IMR-90 (cell line): ENCODE measurements at regions of chr10 and their contacts with region 1.

Region 1: GRCh38 chr10:35924759-35925158 is 282.7 kb upstream of the FZD8 start:
- DNase-seq: no peak
- ATAC-seq: no peak
- H3K4me3 ChIP-seq: no peak overlapping the region
- H3K27ac ChIP-seq: no peak overlapping the region
- H3K4me1 ChIP-seq: peaks cover 2% of the 10 kb centered on the region
- H3K27me3 ChIP-seq: no peaks in the 10 kb centered on the region
- CTCF ChIP-seq: no peak
- POLR2A ChIP-seq: no peak
- RAD21 ChIP-seq: no peak

Region 2: GRCh38 chr10:35563261-35563891 is 361.4 kb before region 1 on chr10:
- CTCF ChIA-PET with region 1: no interaction called
- POLR2A ChIA-PET with region 1: no interaction called
- dilution Hi-C with region 1: no loop called
- in situ Hi-C with region 1: no loop called
- intact Hi-C with region 1: no loop called
- DNase-seq: peak; percentile 76
- ATAC-seq: peak; percentile 64
- H3K4me3 ChIP-seq: no peak overlapping the region
- H3K27ac ChIP-seq: no peak overlapping the region
- H3K4me1 ChIP-seq: peaks cover 6% of the 10 kb centered on the region
- H3K27me3 ChIP-seq: no peaks in the 10 kb centered on the region
- CTCF ChIP-seq: peak; percentile 92
- POLR2A ChIP-seq: no peak
- RAD21 ChIP-seq: peak; percentile 83

Region 3: DNA sequence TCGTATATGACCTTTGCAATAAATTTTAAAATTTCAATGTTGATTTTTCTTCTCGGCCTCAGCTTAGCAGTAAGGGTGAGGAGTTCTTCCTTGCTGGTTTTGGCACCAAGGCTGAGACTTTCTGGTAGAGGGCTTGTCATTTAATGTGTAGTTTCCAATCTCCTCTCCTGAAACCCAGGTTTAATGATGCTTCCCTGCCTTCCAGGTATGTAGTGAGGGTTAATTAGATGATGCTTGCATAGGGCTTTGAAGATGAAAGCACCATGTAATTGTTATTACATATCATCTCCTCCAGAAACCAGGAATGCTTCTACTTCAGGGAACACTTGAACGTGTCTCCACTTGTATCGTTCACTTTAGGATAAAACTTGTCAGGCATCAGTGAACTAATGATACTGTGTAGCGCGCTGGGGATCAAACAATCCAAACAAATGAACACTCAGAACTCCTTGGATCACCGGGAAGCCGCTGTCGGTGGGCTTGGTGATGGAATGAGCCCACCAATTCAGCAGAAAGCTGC is 21.8 kb before region 1 on chr10:
- CTCF ChIA-PET with region 1: no interaction called
- POLR2A ChIA-PET with region 1: no interaction called
- dilution Hi-C with region 1: no loop called
- in situ Hi-C with region 1: no loop called
- intact Hi-C with region 1: loop called (anchors 1 kb)
- DNase-seq: no peak
- ATAC-seq: no peak
- H3K4me3 ChIP-seq: no peak overlapping the region
- H3K27ac ChIP-seq: no peak overlapping the region
- H3K4me1 ChIP-seq: peaks cover 6% of the 10 kb centered on the region
- H3K27me3 ChIP-seq: no peaks in the 10 kb centered on the region
- CTCF ChIP-seq: no peak
- POLR2A ChIP-seq: no peak
- RAD21 ChIP-seq: no peak

Region 4: DNA sequence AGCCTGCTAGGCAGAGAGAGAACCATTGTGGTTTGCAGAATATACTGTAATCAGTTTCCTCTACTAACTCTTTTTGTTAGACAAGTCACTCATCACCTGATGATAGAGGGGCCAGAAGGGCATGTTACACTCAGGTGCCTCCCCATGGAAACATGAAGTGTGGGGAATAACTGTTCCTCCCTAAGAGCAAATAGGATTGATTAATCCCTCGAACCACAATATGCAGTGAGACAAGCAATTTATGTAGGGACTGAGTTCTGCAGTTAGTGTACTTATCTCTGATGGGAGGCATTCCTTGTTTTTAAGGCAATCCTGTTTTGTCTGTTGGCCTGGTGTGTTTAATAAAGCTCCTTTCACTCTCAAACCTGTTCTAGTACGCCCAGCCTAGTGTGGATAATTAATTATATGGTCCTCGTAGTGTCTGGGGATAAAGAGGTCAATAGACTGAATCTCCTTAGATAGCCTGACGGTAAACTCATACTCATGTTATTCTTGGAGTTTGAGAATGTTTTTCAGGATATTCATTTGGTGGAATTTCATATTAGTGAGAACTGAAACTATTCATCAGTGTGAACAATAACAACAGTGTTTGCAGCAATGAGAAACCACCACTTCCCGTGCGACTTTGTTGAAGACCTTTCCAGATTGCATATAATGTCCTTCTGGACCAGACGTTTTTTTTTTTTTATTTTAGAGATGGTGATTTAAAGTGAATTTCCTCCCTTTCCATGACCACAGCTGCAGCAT is 62.2 kb after region 1 on chr10:
- CTCF ChIA-PET with region 1: no interaction called
- POLR2A ChIA-PET with region 1: no interaction called
- dilution Hi-C with region 1: no loop called
- in situ Hi-C with region 1: no loop called
- intact Hi-C with region 1: no loop called
- DNase-seq: no peak
- ATAC-seq: no peak
- H3K4me3 ChIP-seq: no peak overlapping the region
- H3K27ac ChIP-seq: no peak overlapping the region
- H3K4me1 ChIP-seq: no peaks in the 10 kb centered on the region
- H3K27me3 ChIP-seq: no peaks in the 10 kb centered on the region; the same call in 1 of the 2 replicates
- CTCF ChIP-seq: no peak
- POLR2A ChIP-seq: no peak
- RAD21 ChIP-seq: no peak